IMR-90 (cell line): ENCODE measurements at regions of chr21 and their contacts with region 1.

Region 1: DNA sequence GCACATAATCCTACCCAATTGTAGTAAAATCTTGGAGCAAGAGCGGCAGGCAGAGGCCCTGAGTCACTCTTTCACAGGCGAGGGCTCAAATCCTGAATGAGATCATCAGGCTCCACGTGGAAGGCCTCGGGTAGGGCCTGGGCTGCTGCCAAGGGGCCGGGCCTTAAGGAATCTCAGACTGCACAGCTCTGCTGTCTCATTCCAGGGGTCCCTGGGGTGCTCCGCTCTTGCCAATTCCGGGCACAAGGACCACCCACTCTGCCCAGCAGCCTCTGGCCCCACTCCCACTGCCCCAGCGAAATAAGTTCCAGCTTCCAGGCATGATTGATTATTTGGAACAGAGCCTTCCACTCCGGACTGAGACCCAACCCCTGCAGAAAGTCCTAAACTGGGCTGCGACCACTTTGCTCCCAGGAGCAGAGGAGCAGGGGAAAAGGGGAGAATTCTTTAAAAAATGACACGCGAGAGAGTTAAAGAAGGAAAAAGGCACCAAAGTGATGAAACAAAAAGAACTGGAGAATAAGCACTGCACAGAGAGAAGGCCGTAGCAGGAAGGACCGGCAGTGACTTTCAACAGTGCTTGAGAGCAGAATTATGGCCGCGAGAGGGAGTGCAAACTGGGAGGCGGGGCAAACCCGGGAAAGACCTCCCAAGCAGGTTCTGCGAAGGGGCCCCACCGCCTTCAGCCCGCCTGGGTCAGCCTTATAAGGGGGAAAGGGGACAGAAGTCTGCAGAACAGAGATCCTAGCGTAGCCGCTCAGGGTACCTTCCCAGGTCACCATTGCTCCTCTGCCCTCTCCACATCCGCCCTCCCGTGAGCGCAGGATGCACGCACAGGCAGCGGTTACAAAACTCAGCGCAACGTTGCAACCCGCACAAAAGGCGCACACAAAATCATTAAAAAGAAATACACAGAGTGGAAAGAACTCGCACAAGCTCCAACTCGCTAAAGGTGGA is 2.0 kb downstream of the ADAMTS1 start:
- DNase-seq: peak; percentile 96
- ATAC-seq: peak; percentile 7
- H3K4me3 ChIP-seq: peak overlapping the region; percentile 97
- H3K27ac ChIP-seq: peak overlapping the region; percentile 89
- H3K4me1 ChIP-seq: peaks cover 6% of the 10 kb centered on the region
- H3K27me3 ChIP-seq: no peaks in the 10 kb centered on the region
- CTCF ChIP-seq: no peak
- POLR2A ChIP-seq: peak; percentile 50; the same call in 1 of the 2 replicates
- RAD21 ChIP-seq: 0 out of 2 replicates have a peak, but pooled peaks have one; percentile 11

Region 2: DNA sequence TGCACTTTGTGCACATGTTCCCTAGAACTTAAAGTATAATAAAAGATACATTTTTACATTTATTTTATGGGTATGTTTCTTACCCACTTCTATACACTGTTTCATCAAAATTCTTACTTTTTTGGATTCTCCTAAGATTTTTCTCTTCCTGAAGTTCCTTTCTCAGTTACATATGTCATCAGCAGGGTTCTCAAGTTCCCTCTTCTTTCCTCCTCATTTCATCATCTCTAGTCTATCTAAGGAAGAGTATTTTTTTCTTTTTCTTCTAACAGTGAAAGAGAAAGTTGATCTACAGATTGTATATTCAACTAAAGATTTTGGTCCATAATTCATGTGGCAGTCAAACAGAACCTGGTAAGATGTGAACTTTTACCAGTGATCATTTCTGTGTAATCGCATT is 229.0 kb before region 1 on chr21:
- CTCF ChIA-PET with region 1: no interaction called
- POLR2A ChIA-PET with region 1: no interaction called
- dilution Hi-C with region 1: no loop called
- in situ Hi-C with region 1: no loop called
- intact Hi-C with region 1: no loop called
- DNase-seq: no peak
- ATAC-seq: no peak
- H3K4me3 ChIP-seq: no peak overlapping the region
- H3K27ac ChIP-seq: no peak overlapping the region
- H3K4me1 ChIP-seq: no peaks in the 10 kb centered on the region
- H3K27me3 ChIP-seq: no peaks in the 10 kb centered on the region
- CTCF ChIP-seq: no peak
- POLR2A ChIP-seq: no peak
- RAD21 ChIP-seq: no peak

Region 3: DNA sequence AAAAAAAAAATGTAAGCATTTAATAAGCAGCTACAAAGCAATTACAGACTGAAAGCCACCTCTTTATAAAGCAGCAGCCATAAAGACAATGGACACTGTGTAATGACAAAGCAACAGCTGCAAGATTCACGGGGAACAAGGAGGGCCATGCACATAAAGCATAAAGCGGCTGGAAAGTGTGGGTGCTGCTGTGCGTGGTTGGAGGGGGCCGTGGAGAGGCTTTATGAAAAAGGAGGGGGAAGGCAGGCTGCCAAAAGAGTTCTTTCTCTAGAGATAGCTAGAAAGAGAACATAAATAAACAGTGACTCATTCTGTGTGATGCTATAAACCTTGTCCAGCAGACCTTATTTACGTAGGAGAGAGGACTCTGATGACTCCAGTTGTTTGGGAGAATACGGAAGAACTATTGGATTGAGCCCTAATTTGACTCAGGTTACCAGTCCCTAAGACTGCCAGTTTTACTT is 47.4 kb before region 1 on chr21:
- CTCF ChIA-PET with region 1: no interaction called
- POLR2A ChIA-PET with region 1: no interaction called
- dilution Hi-C with region 1: no loop called
- in situ Hi-C with region 1: no loop called
- intact Hi-C with region 1: no loop called
- DNase-seq: peak; percentile 100
- ATAC-seq: peak; percentile 90
- H3K4me3 ChIP-seq: no peak overlapping the region
- H3K27ac ChIP-seq: peak overlapping the region; percentile 70
- H3K4me1 ChIP-seq: peaks cover 15% of the 10 kb centered on the region
- H3K27me3 ChIP-seq: no peaks in the 10 kb centered on the region
- CTCF ChIP-seq: no peak
- POLR2A ChIP-seq: no peak
- RAD21 ChIP-seq: no peak

Region 4: DNA sequence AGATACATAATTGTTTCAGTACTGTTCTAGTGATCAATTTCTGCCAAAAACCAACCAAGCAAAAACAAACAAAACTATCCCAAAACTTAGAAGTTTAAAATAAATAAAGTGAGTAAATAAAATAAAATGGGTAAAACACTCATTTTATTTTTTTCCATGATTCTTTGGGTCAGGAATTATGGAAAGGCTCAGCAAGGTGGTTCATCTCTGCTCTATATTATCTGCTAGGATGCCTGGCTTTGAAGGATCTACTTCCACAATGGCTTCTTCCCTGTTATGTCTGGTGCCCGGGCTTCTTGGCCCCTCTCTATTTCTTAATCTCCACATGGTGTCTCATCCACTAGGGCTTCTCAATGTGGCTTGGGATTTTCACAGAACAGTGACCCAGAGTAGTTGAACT is 31.1 kb after region 1 on chr21:
- CTCF ChIA-PET with region 1: no interaction called
- POLR2A ChIA-PET with region 1: no interaction called
- dilution Hi-C with region 1: no loop called
- in situ Hi-C with region 1: no loop called
- intact Hi-C with region 1: no loop called
- DNase-seq: no peak
- ATAC-seq: no peak
- H3K4me3 ChIP-seq: no peak overlapping the region
- H3K27ac ChIP-seq: no peak overlapping the region
- H3K4me1 ChIP-seq: no peaks in the 10 kb centered on the region
- H3K27me3 ChIP-seq: no peaks in the 10 kb centered on the region
- CTCF ChIP-seq: no peak
- POLR2A ChIP-seq: no peak
- RAD21 ChIP-seq: no peak

Region 5: DNA sequence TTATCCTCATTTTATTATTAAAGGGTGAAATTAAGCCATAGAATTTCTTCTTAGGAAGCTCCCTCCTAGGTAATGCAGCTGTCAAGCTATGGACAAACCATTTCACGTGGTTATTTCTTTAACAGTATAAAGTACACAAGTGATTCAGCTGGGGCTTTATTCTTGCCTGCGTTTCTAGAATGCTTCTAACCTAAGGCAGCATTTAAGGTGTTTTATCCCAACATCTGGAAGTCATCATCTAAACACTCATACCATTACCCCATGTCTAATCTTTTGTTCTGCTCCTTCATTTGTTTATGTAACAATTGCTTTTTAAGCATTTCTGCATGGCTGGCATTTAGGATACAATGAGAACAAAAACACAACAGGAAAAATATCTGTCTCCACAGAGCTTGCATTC is 952.9 kb after region 1 on chr21:
- CTCF ChIA-PET with region 1: no interaction called
- POLR2A ChIA-PET with region 1: no interaction called
- dilution Hi-C with region 1: no loop called
- in situ Hi-C with region 1: no loop called
- intact Hi-C with region 1: loop called (anchors 5 kb)
- DNase-seq: peak; percentile 68
- ATAC-seq: peak; percentile 75
- H3K4me3 ChIP-seq: no peak overlapping the region
- H3K27ac ChIP-seq: no peak overlapping the region
- H3K4me1 ChIP-seq: no peaks in the 10 kb centered on the region
- H3K27me3 ChIP-seq: no peaks in the 10 kb centered on the region
- CTCF ChIP-seq: no peak
- POLR2A ChIP-seq: no peak
- RAD21 ChIP-seq: no peak

Region 6: GRCh38 chr21:28154121-28154520 is 1310.9 kb after region 1 on chr21:
- CTCF ChIA-PET with region 1: no interaction called
- POLR2A ChIA-PET with region 1: no interaction called
- dilution Hi-C with region 1: no loop called
- in situ Hi-C with region 1: no loop called
- intact Hi-C with region 1: loop called (anchors 5 kb)
- DNase-seq: peak; percentile 19
- ATAC-seq: peak; percentile 44; the same call in 1 of the 2 replicates
- H3K4me3 ChIP-seq: no peak overlapping the region
- H3K27ac ChIP-seq: peak overlapping the region; percentile 90; the same call in 1 of the 2 replicates
- H3K4me1 ChIP-seq: peaks cover 6% of the 10 kb centered on the region
- H3K27me3 ChIP-seq: no peaks in the 10 kb centered on the region
- CTCF ChIP-seq: no peak
- POLR2A ChIP-seq: no peak
- RAD21 ChIP-seq: no peak

Region 7: GRCh38 chr21:28421716-28422524 is 1578.7 kb after region 1 on chr21:
- CTCF ChIA-PET with region 1: no interaction called
- POLR2A ChIA-PET with region 1: no interaction called
- dilution Hi-C with region 1: no loop called
- in situ Hi-C with region 1: no loop called
- intact Hi-C with region 1: loop called (anchors 10 kb)
- DNase-seq: peak; percentile 78
- ATAC-seq: peak; percentile 56
- H3K4me3 ChIP-seq: no peak overlapping the region
- H3K27ac ChIP-seq: peak overlapping the region; percentile 79; the same call in 1 of the 2 replicates
- H3K4me1 ChIP-seq: peaks cover 11% of the 10 kb centered on the region
- H3K27me3 ChIP-seq: no peaks in the 10 kb centered on the region
- CTCF ChIP-seq: no peak
- POLR2A ChIP-seq: no peak
- RAD21 ChIP-seq: no peak

Region 8: DNA sequence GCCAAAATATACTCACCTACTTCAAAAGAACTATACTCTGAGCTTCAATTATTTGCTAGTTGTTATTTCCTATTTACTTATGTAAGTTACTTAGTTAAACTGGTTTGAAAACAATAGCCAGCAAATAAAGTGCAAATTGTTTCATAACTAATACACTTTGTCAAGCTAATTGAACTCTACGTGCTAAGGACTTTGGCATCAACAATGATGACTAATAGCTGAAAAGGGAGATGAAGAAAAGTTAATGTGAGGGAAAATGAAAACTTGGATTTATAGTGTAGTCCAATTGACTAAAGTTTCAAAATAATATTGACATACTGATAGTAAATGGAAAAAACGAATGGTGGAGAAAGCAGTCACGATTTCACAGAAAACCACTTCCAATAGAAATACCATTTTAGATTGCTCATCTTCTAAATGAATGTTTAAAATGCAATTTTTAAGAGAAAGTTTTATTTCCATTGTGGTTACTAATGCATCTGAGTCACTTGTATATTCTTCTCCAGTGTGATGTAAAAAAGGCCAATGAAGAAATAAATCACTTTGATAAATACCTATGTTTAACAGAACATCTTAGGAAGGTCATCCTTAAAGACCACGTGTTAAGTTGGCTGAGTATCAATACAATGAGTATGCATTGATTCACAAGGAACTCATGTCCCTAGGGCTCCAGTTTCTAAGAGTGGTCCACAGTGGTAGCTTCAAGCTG is 1694.3 kb after region 1 on chr21:
- CTCF ChIA-PET with region 1: no interaction called
- POLR2A ChIA-PET with region 1: no interaction called
- dilution Hi-C with region 1: no loop called
- in situ Hi-C with region 1: no loop called
- intact Hi-C with region 1: loop called (anchors 5 kb)
- DNase-seq: peak; percentile 100
- ATAC-seq: peak; percentile 48
- H3K4me3 ChIP-seq: no peak overlapping the region
- H3K27ac ChIP-seq: peak overlapping the region; percentile 76; the same call in 1 of the 2 replicates
- H3K4me1 ChIP-seq: peaks cover 17% of the 10 kb centered on the region
- H3K27me3 ChIP-seq: no peaks in the 10 kb centered on the region
- CTCF ChIP-seq: no peak
- POLR2A ChIP-seq: no peak
- RAD21 ChIP-seq: peak; percentile 12; the same call in 1 of the 2 replicates

Region 9: GRCh38 chr21:28624626-28625025 is 1781.4 kb after region 1 on chr21:
- CTCF ChIA-PET with region 1: no interaction called
- POLR2A ChIA-PET with region 1: no interaction called
- dilution Hi-C with region 1: no loop called
- in situ Hi-C with region 1: no loop called
- intact Hi-C with region 1: no loop called
- DNase-seq: no peak
- ATAC-seq: no peak
- H3K4me3 ChIP-seq: no peak overlapping the region
- H3K27ac ChIP-seq: no peak overlapping the region
- H3K4me1 ChIP-seq: no peaks in the 10 kb centered on the region; the same call in 1 of the 2 replicates
- H3K27me3 ChIP-seq: no peaks in the 10 kb centered on the region
- CTCF ChIP-seq: no peak
- POLR2A ChIP-seq: no peak
- RAD21 ChIP-seq: no peak

Region 10: GRCh38 chr21:28771790-28772501 is 1928.7 kb after region 1 on chr21:
- CTCF ChIA-PET with region 1: no interaction called
- POLR2A ChIA-PET with region 1: no interaction called
- dilution Hi-C with region 1: no loop called
- in situ Hi-C with region 1: no loop called
- intact Hi-C with region 1: loop called (anchors 10 kb)
- DNase-seq: peak; percentile 91
- ATAC-seq: peak; percentile 68
- H3K4me3 ChIP-seq: no peak overlapping the region
- H3K27ac ChIP-seq: peak overlapping the region; percentile 99
- H3K4me1 ChIP-seq: peaks cover 18% of the 10 kb centered on the region
- H3K27me3 ChIP-seq: no peaks in the 10 kb centered on the region
- CTCF ChIP-seq: no peak
- POLR2A ChIP-seq: no peak
- RAD21 ChIP-seq: no peak